GM10248 (cell line): ENCODE measurements at regions of chr7 and their contacts with region 1.

Region 1: GRCh38 chr7:140003913-140004382 is 58.8 kb downstream of the PARP12 start:
- DNase-seq: peak; percentile 73
- CTCF ChIP-seq: peak; percentile 32

Region 2: GRCh38 chr7:139496528-139496927 is 507.4 kb before region 1 on chr7:
- CTCF ChIA-PET with region 1: interaction called, 62 read pairs
- POLR2A ChIA-PET with region 1: no interaction called
- DNase-seq: no peak
- CTCF ChIP-seq: no peak

Region 3: DNA sequence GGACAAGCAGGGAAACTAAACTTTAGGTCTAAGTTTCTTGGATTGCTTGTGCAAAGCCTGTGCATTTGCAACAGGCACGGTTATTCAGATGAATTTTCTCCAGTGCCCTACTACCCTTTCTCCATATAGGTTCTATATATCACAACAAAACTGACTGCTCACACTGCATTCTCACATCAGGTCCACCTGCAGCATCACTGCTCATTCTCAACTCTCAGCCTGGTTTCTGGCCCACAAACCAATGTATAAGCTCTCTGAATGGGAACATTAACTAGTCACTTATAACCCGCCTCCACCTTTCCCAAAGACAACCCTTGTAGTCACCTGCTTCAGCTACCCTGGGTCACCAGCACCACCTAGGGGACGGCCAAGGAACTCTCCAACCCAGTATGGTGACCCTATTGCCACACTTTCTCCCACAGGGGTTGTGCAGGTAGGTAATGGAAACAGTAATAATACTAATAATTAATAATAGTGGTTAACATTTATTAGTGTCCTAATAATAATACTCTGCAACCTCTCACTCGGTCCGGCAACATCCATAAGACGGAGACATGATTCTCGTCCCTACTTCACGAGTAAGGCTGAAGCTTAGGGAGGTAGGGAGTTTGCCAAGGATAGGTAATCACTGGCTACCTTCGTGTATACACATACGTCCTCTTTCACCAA is 383.1 kb before region 1 on chr7:
- CTCF ChIA-PET with region 1: interaction called, 30 read pairs
- POLR2A ChIA-PET with region 1: no interaction called
- DNase-seq: peak; percentile 60
- CTCF ChIP-seq: peak; percentile 52

Region 4: DNA sequence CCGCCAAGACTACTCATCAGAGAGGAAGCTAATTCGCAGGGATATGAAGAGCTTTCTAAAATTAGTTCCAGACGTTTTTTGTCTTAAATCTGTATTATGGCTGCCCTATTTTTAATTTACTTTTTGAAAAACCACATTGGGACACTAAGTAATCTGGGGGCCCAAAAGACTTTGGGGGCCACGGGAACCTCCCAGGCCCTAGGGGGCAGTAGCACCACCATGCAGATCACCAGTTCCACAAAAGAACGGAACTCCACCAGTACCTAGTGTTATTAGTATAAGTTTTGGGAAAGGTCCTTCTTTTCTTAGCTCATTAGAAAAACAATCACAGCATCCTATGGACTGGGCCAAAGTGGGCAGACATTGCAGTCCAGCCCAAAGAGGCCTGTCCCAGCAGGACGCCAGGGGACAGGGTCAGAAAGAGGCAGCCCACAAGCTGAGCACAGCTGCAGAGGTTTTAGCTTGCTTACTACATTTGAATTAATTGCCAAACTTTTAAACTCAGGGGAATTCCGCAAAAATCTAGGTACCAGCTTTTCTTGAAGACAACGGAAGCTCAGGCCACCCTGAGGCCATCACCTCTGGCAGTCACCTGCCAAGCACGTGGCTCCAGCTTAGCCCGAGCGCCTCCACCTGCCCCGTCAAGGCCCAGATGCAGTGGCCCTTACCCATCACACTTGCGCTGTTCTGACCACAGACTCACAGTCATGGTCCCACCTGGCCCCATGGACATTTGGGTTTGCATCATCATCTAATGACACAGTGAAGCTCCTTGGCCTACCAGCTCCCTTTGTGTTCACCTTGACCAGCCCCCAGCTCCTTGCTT is 16.0 kb before region 1 on chr7:
- CTCF ChIA-PET with region 1: interaction called, 40 read pairs
- POLR2A ChIA-PET with region 1: no interaction called
- DNase-seq: no peak
- CTCF ChIP-seq: no peak